Pancreas (tissue), 10 donors: ENCODE measurements at regions of chr5 and their contacts with region 1.

Region 1: GRCh38 chr5:145237843-145238242 is 597.3 kb downstream of the PRELID2 start:
- DNase-seq: peak in 4 of 6 donors; percentile 37 to 78 (median 65)
- ATAC-seq: peak; percentile 95 to 100 (median 98)
- H3K4me3 ChIP-seq: no peak overlapping the region
- H3K27ac ChIP-seq: no peak overlapping the region
- H3K4me1 ChIP-seq: no peaks in the 10 kb centered on the region
- H3K27me3 ChIP-seq: no peaks in the 10 kb centered on the region
- CTCF ChIP-seq: peak; percentile 47 to 71 (median 60)

Region 2: DNA sequence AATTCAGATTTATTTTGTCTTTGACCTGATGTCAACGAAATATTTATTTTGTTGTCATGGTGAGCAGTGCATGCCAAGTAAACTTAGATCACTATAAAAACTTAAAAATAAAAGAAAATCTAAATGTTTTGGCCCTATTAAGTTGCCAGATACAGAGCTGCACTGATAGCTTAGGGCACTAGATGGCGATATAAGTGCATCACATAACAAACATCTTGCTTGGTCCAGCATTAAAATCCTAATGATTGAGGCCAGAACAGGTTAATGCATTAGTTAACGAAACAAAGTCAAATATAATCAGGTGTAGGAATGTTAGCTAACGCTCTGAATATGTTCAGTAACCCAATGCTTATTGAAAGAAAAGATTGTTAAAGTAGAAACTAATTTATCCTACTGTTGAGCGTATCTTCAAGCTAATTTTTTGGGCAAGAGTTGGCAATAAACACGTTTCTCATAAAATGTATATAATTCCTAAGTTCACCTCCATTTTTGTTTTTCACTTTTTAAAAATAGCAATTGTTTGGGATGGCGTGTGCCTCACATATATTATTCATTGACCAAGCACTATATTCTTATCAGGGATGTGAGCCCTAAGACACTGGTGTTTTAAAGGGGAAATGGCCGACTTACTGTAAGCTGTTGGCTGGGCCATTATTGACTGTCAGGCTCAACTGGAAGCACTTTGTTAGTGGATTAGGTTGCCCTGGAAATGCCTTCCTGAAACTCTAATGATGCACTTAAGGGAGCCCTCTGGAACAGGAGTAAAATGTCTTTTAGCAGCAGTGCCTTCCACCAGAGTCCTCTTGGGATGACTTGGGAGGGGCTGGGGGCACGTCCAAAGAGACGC is 1033.9 kb before region 1 on chr5:
- intact Hi-C with region 1: loop called in 1 of 3 experiments (anchors 5 kb)
- DNase-seq: peak in 3 of 6 donors; percentile 23 to 64 (median 26)
- ATAC-seq: peak; percentile 64 to 81 (median 78)
- H3K4me3 ChIP-seq: no peak overlapping the region
- H3K27ac ChIP-seq: no peak overlapping the region
- H3K4me1 ChIP-seq: peaks cover 0 to 6% (median 0%) of the 10 kb centered on the region in 3 donors
- H3K27me3 ChIP-seq: no peaks in the 10 kb centered on the region
- CTCF ChIP-seq: peak; percentile 60 to 89 (median 78)

Region 3: GRCh38 chr5:145324767-145325480 is 87.1 kb after region 1 on chr5:
- intact Hi-C with region 1: no loop called
- DNase-seq: no peak
- ATAC-seq: no peak
- H3K4me3 ChIP-seq: no peak overlapping the region
- H3K27ac ChIP-seq: no peak overlapping the region
- H3K4me1 ChIP-seq: no peaks in the 10 kb centered on the region
- H3K27me3 ChIP-seq: no peaks in the 10 kb centered on the region
- CTCF ChIP-seq: no peak

Region 4: DNA sequence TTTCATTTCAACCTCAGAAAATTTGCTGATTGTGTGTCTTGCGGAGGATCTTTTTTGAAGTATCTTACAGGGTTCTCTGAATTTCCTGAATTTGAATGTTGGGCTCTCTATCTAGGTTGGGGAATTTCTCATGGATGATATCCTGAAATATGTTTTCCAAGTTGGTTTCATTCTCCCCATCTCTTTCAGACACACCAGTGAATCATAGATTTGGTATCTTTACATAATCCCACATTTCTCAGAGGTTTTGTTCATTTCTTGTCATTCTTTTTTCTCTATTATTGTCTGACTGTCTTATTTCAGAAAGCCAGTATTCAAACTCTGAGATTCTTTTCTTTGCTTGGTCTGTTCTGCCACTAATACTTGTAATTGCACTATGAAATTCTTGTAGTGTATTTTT is 140.4 kb after region 1 on chr5:
- intact Hi-C with region 1: no loop called
- DNase-seq: no peak
- ATAC-seq: no peak
- H3K4me3 ChIP-seq: no peak overlapping the region
- H3K27ac ChIP-seq: no peak overlapping the region
- H3K4me1 ChIP-seq: no peaks in the 10 kb centered on the region
- H3K27me3 ChIP-seq: no peaks in the 10 kb centered on the region
- CTCF ChIP-seq: no peak